IMR-90 (cell line): ENCODE measurements at regions of chr3 and their contacts with region 1.

Region 1: GRCh38 chr3:157136647-157137387 is 23.1 kb downstream of the CCNL1 start:
- DNase-seq: peak; percentile 52
- ATAC-seq: peak; percentile 5; the same call in 1 of the 2 replicates
- H3K4me3 ChIP-seq: no peak overlapping the region
- H3K27ac ChIP-seq: peak overlapping the region; percentile 8; the same call in 1 of the 2 replicates
- H3K4me1 ChIP-seq: peaks cover 20% of the 10 kb centered on the region
- H3K27me3 ChIP-seq: no peaks in the 10 kb centered on the region
- CTCF ChIP-seq: no peak
- POLR2A ChIP-seq: no peak
- RAD21 ChIP-seq: no peak

Region 2: GRCh38 chr3:155995525-155996351 is 1141.1 kb before region 1 on chr3:
- CTCF ChIA-PET with region 1: no interaction called
- POLR2A ChIA-PET with region 1: no interaction called
- dilution Hi-C with region 1: no loop called
- in situ Hi-C with region 1: loop called (anchors 25 kb)
- intact Hi-C with region 1: loop called (anchors 5 kb)
- DNase-seq: peak; percentile 72
- ATAC-seq: peak; percentile 95
- H3K4me3 ChIP-seq: no peak overlapping the region
- H3K27ac ChIP-seq: no peak overlapping the region
- H3K4me1 ChIP-seq: 0 out of 2 replicates have a peak, but pooled peaks cover 2% of the 10 kb centered on the region
- H3K27me3 ChIP-seq: no peaks in the 10 kb centered on the region
- CTCF ChIP-seq: peak; percentile 68
- POLR2A ChIP-seq: no peak
- RAD21 ChIP-seq: peak; percentile 64

Region 3: DNA sequence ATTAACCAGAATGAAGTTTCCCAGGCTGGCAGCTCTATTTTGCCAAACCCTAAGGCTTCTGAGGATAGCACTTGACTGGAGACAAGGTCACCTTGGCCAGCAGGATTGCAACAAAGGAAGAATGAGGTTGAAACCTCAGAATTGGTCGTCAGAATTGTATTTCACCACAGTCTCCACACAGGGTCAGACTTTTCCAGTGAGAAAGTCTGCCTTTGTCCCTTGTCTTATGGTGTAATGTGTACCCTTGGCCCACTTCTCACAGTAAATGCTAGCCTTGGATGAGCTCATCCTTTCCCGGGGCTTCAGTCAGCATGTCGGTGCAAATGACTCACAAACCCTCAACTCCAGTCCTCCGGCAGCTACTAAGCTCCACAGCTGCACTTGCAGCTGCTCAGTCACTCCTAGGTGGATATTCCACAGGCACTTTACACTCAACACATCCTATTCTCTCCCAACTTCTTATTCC is 601.6 kb before region 1 on chr3:
- CTCF ChIA-PET with region 1: interaction called, 3 read pairs
- POLR2A ChIA-PET with region 1: no interaction called
- dilution Hi-C with region 1: no loop called
- in situ Hi-C with region 1: no loop called
- intact Hi-C with region 1: loop called (anchors 2 kb)
- DNase-seq: peak; percentile 100
- ATAC-seq: peak; percentile 88
- H3K4me3 ChIP-seq: no peak overlapping the region
- H3K27ac ChIP-seq: peak overlapping the region; percentile 28; the same call in 1 of the 2 replicates
- H3K4me1 ChIP-seq: peaks cover 18% of the 10 kb centered on the region
- H3K27me3 ChIP-seq: no peaks in the 10 kb centered on the region
- CTCF ChIP-seq: peak; percentile 53
- POLR2A ChIP-seq: peak; percentile 74
- RAD21 ChIP-seq: peak; percentile 61

Region 4: GRCh38 chr3:156554842-156555687 is 581.8 kb before region 1 on chr3 and contains the start of gene SSR3:
- CTCF ChIA-PET with region 1: interaction called, 4 read pairs
- POLR2A ChIA-PET with region 1: no interaction called
- dilution Hi-C with region 1: no loop called
- in situ Hi-C with region 1: no loop called
- intact Hi-C with region 1: loop called (anchors 5 kb)
- DNase-seq: peak; percentile 100
- ATAC-seq: peak; percentile 97
- H3K4me3 ChIP-seq: peak within 1 kb of the TSS; percentile 76
- H3K27ac ChIP-seq: peak within 1 kb of the TSS; percentile 100
- H3K4me1 ChIP-seq: peaks cover 9% of the 10 kb centered on the region
- H3K27me3 ChIP-seq: no peaks in the 10 kb centered on the region
- CTCF ChIP-seq: no peak
- POLR2A ChIP-seq: peak; percentile 97
- RAD21 ChIP-seq: 0 out of 2 replicates have a peak, but pooled peaks have one; percentile 5
- total RNA-seq, gene SSR3: 606 and 608 TPM in 2 replicates

Region 5: GRCh38 chr3:156685198-156685597 is 451.6 kb before region 1 on chr3:
- CTCF ChIA-PET with region 1: interaction called, 4 read pairs
- POLR2A ChIA-PET with region 1: no interaction called
- dilution Hi-C with region 1: no loop called
- in situ Hi-C with region 1: loop called (anchors 5 kb)
- intact Hi-C with region 1: no loop called
- DNase-seq: peak; percentile 53
- ATAC-seq: peak; percentile 28
- H3K4me3 ChIP-seq: no peak overlapping the region
- H3K27ac ChIP-seq: peak overlapping the region; percentile 19; the same call in 1 of the 2 replicates
- H3K4me1 ChIP-seq: peaks cover 29% of the 10 kb centered on the region
- H3K27me3 ChIP-seq: no peaks in the 10 kb centered on the region
- CTCF ChIP-seq: no peak
- POLR2A ChIP-seq: no peak; the same call in 1 of the 2 replicates
- RAD21 ChIP-seq: no peak

Region 6: GRCh38 chr3:156865732-156866131 is 271.1 kb before region 1 on chr3:
- CTCF ChIA-PET with region 1: no interaction called
- POLR2A ChIA-PET with region 1: no interaction called
- dilution Hi-C with region 1: no loop called
- in situ Hi-C with region 1: no loop called
- intact Hi-C with region 1: loop called (anchors 5 kb)
- DNase-seq: peak; percentile 40
- ATAC-seq: no peak
- H3K4me3 ChIP-seq: no peak overlapping the region
- H3K27ac ChIP-seq: no peak overlapping the region
- H3K4me1 ChIP-seq: no peaks in the 10 kb centered on the region
- H3K27me3 ChIP-seq: no peaks in the 10 kb centered on the region
- CTCF ChIP-seq: peak; percentile 40; the same call in 1 of the 2 replicates
- POLR2A ChIP-seq: no peak
- RAD21 ChIP-seq: peak; percentile 50

Region 7: GRCh38 chr3:157088601-157089454 is 48.0 kb before region 1 on chr3:
- CTCF ChIA-PET with region 1: interaction called, 14 read pairs
- POLR2A ChIA-PET with region 1: no interaction called
- dilution Hi-C with region 1: no loop called
- in situ Hi-C with region 1: no loop called
- intact Hi-C with region 1: loop called (anchors 1 kb)
- DNase-seq: peak; percentile 94
- ATAC-seq: peak; percentile 90
- H3K4me3 ChIP-seq: peak overlapping the region; percentile 45
- H3K27ac ChIP-seq: peak overlapping the region; percentile 94
- H3K4me1 ChIP-seq: peaks cover 22% of the 10 kb centered on the region
- H3K27me3 ChIP-seq: no peaks in the 10 kb centered on the region
- CTCF ChIP-seq: 0 out of 2 replicates have a peak, but pooled peaks have one; percentile 19
- POLR2A ChIP-seq: peak; percentile 87
- RAD21 ChIP-seq: 0 out of 2 replicates have a peak, but pooled peaks have one; percentile 17